ENCODE measurements at regions of chr5 and their contacts with region 1.

Region 1: GRCh38 chr5:96017951-96018350 is 56.3 kb upstream of the ELL2 start:
- DNase-seq: no peak
- H3K4me3 ChIP-seq: no peak overlapping the region
- H3K4me3 Mint-ChIP-seq: no peak overlapping the region
- H3K27ac ChIP-seq: no peak overlapping the region
- H3K27ac Mint-ChIP-seq: no peak overlapping the region
- H3K4me1 ChIP-seq: no peaks in the 10 kb centered on the region
- H3K4me1 Mint-ChIP-seq: no peaks in the 10 kb centered on the region
- H3K27me3 ChIP-seq: no peaks in the 10 kb centered on the region
- H3K27me3 Mint-ChIP-seq: no peaks in the 10 kb centered on the region

Region 2: GRCh38 chr5:94674490-94675382 is 1343.2 kb before region 1 on chr5:
- CTCF ChIA-PET with region 1: no interaction called
- POLR2A ChIA-PET with region 1: interaction called, 10 read pairs
- DNase-seq: no peak
- H3K4me3 ChIP-seq: no peak overlapping the region
- H3K4me3 Mint-ChIP-seq: no peak overlapping the region
- H3K27ac ChIP-seq: no peak overlapping the region
- H3K27ac Mint-ChIP-seq: no peak overlapping the region
- H3K4me1 ChIP-seq: no peaks in the 10 kb centered on the region
- H3K4me1 Mint-ChIP-seq: peaks cover 12 to 31% (median 13%) of the 10 kb centered on the region in 3 donors
- H3K27me3 ChIP-seq: no peaks in the 10 kb centered on the region
- H3K27me3 Mint-ChIP-seq: no peaks in the 10 kb centered on the region